Activated B cell treated with CpG ODN at 0.5 μM for 24 hours (primary cell): ENCODE measurements at regions of chr6 and their contacts with region 1.

Region 1: GRCh38 chr6:26285143-26286134 is 79.6 kb upstream of the BTN3A2 start:
- DNase-seq: peak; percentile 80
- ATAC-seq: peak; percentile 75
- H3K4me3 Mint-ChIP-seq: peak overlapping the region; percentile 86
- H3K27ac Mint-ChIP-seq: peak overlapping the region; percentile 96
- H3K4me1 Mint-ChIP-seq: peaks cover 29% of the 10 kb centered on the region
- H3K27me3 Mint-ChIP-seq: peaks cover 3% of the 10 kb centered on the region
- CTCF ChIP-seq: no peak

Region 2: GRCh38 chr6:25934735-25935306 is 350.6 kb before region 1 on chr6:
- CTCF ChIA-PET with region 1: no interaction called
- POLR2A ChIA-PET with region 1: no interaction called
- intact Hi-C with region 1: no loop called
- DNase-seq: no peak
- ATAC-seq: no peak
- H3K4me3 Mint-ChIP-seq: no peak overlapping the region
- H3K27ac Mint-ChIP-seq: no peak overlapping the region
- H3K4me1 Mint-ChIP-seq: no peaks in the 10 kb centered on the region
- H3K27me3 Mint-ChIP-seq: peaks cover 10% of the 10 kb centered on the region
- CTCF ChIP-seq: no peak

Region 3: DNA sequence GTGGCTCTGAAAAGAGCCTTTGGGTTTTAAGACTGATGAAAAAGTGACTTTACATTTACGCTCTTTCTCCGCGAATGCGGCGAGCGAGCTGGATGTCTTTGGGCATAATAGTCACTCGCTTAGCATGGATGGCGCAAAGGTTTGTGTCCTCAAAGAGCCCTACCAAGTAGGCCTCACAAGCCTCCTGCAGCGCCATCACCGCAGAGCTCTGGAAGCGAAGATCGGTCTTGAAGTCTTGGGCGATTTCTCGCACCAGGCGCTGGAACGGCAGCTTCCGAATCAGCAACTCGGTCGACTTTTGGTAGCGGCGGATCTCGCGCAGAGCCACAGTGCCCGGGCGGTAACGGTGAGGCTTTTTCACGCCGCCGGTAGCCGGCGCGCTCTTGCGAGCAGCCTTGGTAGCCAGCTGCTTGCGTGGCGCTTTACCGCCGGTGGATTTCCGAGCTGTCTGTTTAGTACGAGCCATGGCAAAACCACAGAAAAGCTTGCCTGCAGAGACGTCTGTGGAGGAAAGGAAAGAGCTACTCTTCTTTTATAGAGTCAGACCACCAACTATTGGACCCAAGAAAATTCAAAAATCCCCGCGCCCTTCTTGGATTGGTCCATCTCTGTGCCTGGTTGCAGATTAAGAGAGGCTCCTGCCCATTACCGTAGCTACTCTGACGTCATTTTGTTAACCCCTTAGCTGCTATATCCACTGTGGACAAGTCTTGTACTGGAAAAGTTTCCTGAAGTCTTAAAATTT is 253.7 kb before region 1 on chr6:
- CTCF ChIA-PET with region 1: no interaction called
- POLR2A ChIA-PET with region 1: interaction called, 11 read pairs
- intact Hi-C with region 1: no loop called
- DNase-seq: peak; percentile 55
- ATAC-seq: peak; percentile 62
- H3K4me3 Mint-ChIP-seq: peak overlapping the region; percentile 93
- H3K27ac Mint-ChIP-seq: peak overlapping the region; percentile 98
- H3K4me1 Mint-ChIP-seq: peaks cover 40% of the 10 kb centered on the region
- H3K27me3 Mint-ChIP-seq: peaks cover 2% of the 10 kb centered on the region
- CTCF ChIP-seq: no peak

Region 4: DNA sequence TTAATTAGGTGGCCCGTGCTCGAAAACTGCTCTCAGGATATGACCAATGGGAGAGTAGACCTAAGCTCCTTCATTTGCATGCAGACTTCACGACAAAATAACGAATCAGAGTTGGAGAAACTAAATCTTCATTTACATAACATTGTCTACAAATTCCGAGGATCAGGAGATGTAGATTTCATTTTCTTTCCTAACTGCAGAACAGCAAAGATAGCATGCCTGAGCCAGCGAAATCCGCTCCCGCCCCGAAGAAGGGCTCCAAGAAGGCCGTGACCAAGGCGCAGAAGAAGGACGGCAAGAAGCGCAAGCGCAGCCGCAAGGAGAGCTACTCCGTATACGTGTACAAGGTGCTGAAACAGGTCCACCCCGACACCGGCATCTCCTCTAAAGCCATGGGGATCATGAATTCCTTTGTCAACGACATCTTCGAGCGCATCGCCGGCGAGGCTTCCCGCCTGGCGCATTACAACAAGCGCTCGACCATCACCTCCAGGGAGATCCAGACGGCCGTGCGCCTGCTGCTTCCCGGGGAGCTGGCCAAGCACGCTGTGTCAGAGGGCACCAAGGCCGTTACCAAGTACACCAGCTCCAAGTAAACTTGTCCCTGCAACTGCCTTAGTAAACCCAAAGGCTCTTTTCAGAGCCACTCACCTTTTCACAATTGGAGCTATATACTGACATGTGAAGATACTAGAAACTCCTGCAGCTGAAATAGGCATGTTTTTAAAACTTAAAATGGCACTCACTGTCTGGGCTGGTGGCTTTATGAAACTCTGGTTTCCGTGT is 101.7 kb before region 1 on chr6:
- CTCF ChIA-PET with region 1: interaction called, 6 read pairs
- POLR2A ChIA-PET with region 1: interaction called, 31 read pairs
- intact Hi-C with region 1: no loop called
- DNase-seq: peak; percentile 60
- ATAC-seq: peak; percentile 86
- H3K4me3 Mint-ChIP-seq: peak overlapping the region; percentile 98
- H3K27ac Mint-ChIP-seq: peak overlapping the region; percentile 91
- H3K4me1 Mint-ChIP-seq: peaks cover 30% of the 10 kb centered on the region
- H3K27me3 Mint-ChIP-seq: no peaks in the 10 kb centered on the region
- CTCF ChIP-seq: no peak

Region 5: GRCh38 chr6:26234421-26235296 is 50.8 kb before region 1 on chr6:
- CTCF ChIA-PET with region 1: no interaction called
- POLR2A ChIA-PET with region 1: interaction called, 105 read pairs
- intact Hi-C with region 1: loop called (anchors 1 kb)
- DNase-seq: peak; percentile 49
- ATAC-seq: peak; percentile 77
- H3K4me3 Mint-ChIP-seq: peak overlapping the region; percentile 89
- H3K27ac Mint-ChIP-seq: peak overlapping the region; percentile 97
- H3K4me1 Mint-ChIP-seq: peaks cover 26% of the 10 kb centered on the region
- H3K27me3 Mint-ChIP-seq: no peaks in the 10 kb centered on the region
- CTCF ChIP-seq: no peak

Region 6: DNA sequence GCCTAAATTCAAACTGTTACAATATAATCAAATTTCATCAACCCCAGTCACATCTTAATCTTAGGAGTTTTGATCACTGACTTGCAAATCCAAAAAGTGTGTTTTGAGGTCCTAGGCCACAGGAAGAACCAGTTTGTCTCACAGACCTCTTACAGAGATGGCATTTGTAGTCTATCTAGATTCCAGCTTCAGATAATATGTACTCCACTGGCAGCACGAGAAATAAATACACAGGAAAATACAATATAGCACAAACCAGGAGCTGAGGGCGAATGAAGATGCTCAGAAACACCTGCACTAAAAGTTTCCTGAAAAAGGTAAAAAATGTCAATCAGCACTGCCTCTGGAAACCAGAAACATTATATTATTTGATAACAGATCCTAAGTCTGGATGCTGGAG is 154.2 kb after region 1 on chr6:
- CTCF ChIA-PET with region 1: no interaction called
- POLR2A ChIA-PET with region 1: no interaction called
- intact Hi-C with region 1: loop called (anchors 1 kb)
- DNase-seq: no peak
- ATAC-seq: no peak
- H3K4me3 Mint-ChIP-seq: peak overlapping the region; percentile 92
- H3K27ac Mint-ChIP-seq: peak overlapping the region; percentile 90
- H3K4me1 Mint-ChIP-seq: peaks cover 40% of the 10 kb centered on the region
- H3K27me3 Mint-ChIP-seq: no peaks in the 10 kb centered on the region
- CTCF ChIP-seq: no peak

Region 7: GRCh38 chr6:26596579-26597388 is 311.3 kb after region 1 on chr6 and contains the start of gene ABT1:
- CTCF ChIA-PET with region 1: no interaction called
- POLR2A ChIA-PET with region 1: interaction called, 7 read pairs
- intact Hi-C with region 1: loop called (anchors 1 kb)
- DNase-seq: peak; percentile 91
- ATAC-seq: peak; percentile 90
- H3K4me3 Mint-ChIP-seq: no peak within 1 kb of the TSS
- H3K27ac Mint-ChIP-seq: no peak within 1 kb of the TSS
- H3K4me1 Mint-ChIP-seq: peaks cover 17% of the 10 kb centered on the region
- H3K27me3 Mint-ChIP-seq: peaks cover 5% of the 10 kb centered on the region
- CTCF ChIP-seq: no peak
- total RNA-seq, gene ABT1: 30.7 and 30.8 TPM in 2 replicates

Region 8: GRCh38 chr6:27838058-27838944 is 1552.9 kb after region 1 on chr6:
- CTCF ChIA-PET with region 1: no interaction called
- POLR2A ChIA-PET with region 1: interaction called, 8 read pairs
- intact Hi-C with region 1: loop called (anchors 5 kb)
- DNase-seq: peak; percentile 73
- ATAC-seq: peak; percentile 76
- H3K4me3 Mint-ChIP-seq: no peak overlapping the region
- H3K27ac Mint-ChIP-seq: no peak overlapping the region
- H3K4me1 Mint-ChIP-seq: peaks cover 18% of the 10 kb centered on the region
- H3K27me3 Mint-ChIP-seq: no peaks in the 10 kb centered on the region
- CTCF ChIP-seq: no peak